Breast epithelium (tissue), 4 donors: ENCODE measurements at regions of chr12 and their contacts with region 1.

Region 1: DNA sequence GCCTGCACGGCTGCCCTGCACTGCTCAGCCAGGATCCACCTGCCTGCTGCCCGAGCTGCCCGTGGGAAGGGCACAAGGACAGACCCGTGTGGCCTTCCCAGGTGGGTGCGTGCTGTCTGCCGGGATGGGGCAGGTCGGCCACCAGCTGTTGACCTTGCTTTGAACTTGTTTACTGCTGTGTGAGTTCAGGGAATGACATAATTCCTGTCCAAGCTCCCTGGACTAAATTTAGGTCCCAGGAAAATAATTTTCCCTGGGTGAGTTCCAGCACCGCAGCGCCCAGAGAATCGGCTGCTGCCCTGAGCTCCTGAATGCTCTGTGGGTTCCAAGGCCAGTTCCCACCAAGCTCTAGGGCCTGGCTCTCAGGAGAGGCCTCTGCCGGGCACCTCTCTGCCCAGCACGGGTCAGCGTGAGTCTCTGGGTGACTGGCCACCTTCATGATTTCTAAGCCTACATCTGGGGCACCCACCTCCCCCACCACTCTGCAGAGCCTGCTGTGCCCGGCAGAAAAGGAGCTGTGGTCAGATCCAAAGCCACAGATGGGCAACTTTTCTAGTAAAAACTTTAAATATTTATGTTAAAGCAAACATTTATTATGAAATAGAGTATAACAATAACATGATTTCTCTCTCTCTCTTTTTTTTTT is 27.2 kb upstream of the MLXIP start:
- DNase-seq: no peak
- H3K4me3 ChIP-seq: no peak overlapping the region
- H3K27ac ChIP-seq: peak overlapping the region; percentile 53 to 55
- H3K4me1 ChIP-seq: no peaks in the 10 kb centered on the region
- H3K27me3 ChIP-seq: no peaks in the 10 kb centered on the region
- CTCF ChIP-seq: no peak
- POLR2A ChIP-seq: no peak

Region 2: GRCh38 chr12:122121745-122122144 is 70.4 kb after region 1 on chr12:
- intact Hi-C with region 1: loop called (anchors 1 kb)
- DNase-seq: no peak
- H3K4me3 ChIP-seq: no peak overlapping the region
- H3K27ac ChIP-seq: peak overlapping the region; percentile 15 to 25
- H3K4me1 ChIP-seq: peaks cover 0 to 3% of the 10 kb centered on the region in 2 donors
- H3K27me3 ChIP-seq: no peaks in the 10 kb centered on the region
- CTCF ChIP-seq: no peak
- POLR2A ChIP-seq: no peak